Posterior cingulate gyrus (tissue), 11 donors: ENCODE measurements at regions of chr3 and their contacts with region 1.

Region 1: DNA sequence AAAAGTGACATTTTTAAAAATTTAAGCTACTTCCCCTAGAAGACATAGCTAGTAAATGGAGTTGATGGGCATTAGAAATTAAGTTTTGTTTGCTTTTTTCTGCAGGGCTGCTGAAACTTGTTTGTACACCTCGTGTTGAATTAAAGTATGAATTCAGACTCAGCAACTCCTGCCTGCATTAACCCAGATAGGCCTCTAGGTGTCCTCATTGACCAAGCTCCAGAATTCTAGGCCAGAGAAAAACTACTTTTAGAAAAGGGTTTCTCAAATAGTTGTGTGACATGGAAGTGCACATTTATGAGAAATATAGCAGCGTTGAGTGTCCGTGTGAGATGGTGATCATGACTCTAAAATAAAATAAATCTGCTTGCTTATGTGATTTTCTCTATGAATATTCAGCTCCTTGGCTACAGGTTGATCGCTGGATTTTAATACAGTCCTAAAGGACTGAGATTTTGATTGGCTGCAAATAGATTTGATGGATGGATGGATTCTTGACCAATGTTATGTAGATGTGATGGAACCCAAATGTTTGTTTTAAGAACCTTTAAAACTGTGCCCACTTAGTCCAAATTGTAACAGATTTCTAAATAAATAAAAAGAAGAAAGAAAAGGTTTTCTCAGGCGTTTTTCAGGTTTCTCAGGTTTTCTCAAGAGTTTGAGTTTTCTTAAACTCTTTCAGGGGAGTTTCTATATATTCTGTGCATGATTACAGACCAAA is 39.4 kb upstream of the LMOD3 start:
- DNase-seq: peak in 2 of 10 donors; percentile 29 to 34

Region 2: DNA sequence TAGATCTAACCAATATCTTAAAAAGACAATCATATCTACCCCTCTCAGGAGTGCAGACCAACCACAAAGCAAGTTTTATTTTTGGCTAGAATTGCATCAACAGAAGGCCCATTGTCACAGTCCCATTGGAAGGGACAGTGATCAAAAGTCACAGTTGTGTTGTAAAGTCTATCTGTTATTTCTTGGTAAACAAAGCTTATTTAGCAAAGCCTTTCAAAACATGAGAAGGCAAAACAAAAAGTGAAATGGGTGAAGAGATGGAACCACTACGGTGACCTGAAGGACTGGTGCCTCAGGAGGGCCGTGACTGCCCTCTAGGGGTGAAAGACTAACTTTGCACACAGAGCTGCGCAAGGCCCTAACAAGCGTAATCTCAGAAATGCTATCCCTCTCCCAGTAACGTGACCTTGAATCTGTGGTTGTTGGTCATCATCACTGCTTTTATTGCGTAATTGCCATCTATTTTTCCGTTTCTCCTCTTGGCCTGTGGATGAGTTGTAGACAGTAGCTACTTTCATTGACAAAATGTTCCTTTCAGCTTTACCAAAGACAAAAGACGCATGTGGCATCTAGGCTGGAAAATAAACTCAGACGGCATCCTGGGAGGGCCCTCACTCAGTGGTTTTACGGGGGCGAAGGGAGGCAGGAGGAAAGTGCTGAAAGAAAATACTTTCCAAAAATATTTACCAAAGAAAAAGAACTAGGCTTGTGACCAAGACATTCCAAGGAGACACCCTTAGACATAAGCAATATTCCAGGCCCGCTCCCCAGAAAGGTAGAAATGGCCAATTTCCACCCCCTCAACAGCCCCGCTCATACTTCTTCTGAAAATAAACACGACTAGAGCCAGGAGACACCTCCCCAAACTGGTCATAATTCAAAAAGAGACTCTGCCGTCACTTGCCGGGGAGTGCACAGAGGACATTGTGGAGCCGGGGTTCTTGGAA is 144.8 kb after region 1 on chr3:
- intact Hi-C with region 1: loop called (anchors 2 kb)
- DNase-seq: peak; percentile 39 to 95 (median 70)

Region 3: DNA sequence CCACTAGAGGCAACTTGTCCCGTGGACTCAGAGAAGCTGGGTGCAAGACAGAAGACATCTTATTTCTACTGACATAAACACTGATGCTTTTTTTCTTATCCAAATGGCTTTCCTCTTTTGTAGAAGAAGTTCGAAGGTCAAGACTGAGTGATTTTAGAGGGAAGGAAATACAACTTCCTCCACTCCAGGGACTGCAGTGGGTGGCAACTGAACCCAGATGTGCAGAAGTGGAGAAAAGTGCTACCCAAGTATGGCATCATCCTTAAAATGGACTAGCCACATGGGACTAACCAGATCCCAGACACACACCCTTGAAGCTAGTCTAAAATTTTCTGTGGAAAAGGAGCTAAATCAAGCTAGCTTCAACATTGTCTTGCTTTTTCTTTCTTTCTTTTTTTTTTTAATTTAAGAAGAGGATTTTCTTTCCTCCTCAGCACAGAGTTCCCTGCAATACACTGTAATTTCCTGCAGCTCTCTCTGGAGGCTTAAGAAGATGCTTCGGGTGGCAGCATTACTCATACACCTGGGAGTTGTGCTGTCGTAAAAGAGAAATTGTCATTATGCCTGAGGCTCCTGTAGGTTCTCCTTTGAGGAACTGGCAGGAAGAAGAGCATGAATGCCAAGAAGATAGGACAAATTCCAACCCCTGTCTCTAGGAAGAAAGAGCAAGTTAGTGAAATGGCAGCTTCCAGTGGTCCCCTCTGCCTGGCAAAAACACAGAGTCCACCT is 227.9 kb after region 1 on chr3:
- intact Hi-C with region 1: no loop called
- DNase-seq: no peak

Region 4: GRCh38 chr3:69406163-69406562 is 244.4 kb after region 1 on chr3:
- intact Hi-C with region 1: loop called (anchors 5 kb)
- DNase-seq: peak in 1 of 10 donors; percentile 51

Region 5: DNA sequence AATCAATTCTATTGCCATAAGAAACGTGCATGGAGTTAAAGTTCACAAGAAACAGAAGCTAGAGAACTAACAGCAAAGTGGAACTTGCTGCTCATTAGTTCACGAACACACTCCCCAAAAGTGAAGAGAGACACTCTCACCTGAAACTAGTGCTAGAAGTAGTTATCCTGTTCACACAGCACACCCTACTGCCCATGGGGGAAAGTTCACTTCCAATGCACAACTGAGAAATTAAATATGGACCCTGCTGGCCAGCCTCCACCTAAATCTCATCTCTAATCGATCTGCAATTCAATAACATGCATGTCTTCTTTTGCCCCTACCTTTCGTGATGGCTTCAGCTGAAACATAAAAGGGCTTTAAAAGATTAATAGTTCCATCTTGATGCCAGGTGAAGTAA is 263.5 kb after region 1 on chr3:
- intact Hi-C with region 1: loop called (anchors 5 kb)
- DNase-seq: peak in 1 of 10 donors; percentile 36

Region 6: GRCh38 chr3:69439643-69440270 is 278.0 kb after region 1 on chr3:
- intact Hi-C with region 1: loop called (anchors 1 kb)
- DNase-seq: no peak